ENCODE measurements at regions of chr1 and their contacts with region 1.

Region 1: DNA sequence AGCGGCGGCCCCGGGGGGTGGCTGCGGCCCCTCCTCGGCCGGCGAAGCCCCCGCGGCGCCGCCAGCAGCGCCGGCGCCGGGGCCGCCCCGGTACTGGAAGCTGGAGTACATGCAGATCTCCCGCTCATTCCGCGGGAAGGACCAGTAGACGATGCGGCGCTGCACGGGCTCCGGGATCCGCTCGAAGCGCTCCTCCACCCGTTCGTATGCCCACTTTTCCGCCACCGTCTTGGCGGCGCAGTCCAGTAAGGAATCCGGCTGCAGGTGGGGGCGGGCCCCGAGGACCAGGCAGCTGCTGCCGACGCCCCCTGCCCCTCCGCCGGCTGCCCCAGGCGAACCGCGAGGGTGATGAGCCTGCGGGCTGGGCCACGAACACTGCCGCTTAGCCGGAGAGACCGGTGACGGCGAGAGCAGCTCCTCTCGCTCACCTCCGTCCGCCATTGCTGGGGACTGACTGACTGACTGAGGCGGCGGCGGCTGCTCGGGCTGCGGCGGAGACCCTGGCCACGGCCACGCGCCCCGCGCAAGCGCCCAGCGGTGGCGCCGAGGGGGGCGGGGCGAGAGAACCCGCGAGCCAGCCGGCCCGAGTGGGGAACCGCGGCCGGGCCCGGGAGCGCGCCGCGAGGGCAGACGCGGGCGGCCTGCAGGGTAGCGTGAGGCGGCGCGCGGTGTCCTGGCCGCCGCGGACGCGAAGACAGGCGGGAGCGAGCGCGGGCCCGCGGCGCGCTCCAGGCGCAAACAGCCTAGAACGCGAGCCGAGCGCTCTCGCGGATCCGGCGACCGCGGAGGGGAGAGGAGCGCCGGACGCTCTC is at the start of gene ZSWIM5:
- DNase-seq: peak; percentile 53 to 74 (median 66)
- ATAC-seq: peak; percentile 88
- H3K4me3 ChIP-seq: peak within 1 kb of the TSS; percentile 77
- H3K4me3 Mint-ChIP-seq: peak within 1 kb of the TSS; percentile 84 to 100 (median 94)
- H3K27ac ChIP-seq: peak within 1 kb of the TSS; percentile 50
- H3K27ac Mint-ChIP-seq: peak within 1 kb of the TSS; percentile 66 to 94 (median 83)
- H3K4me1 ChIP-seq: peaks cover 11 to 18% of the 10 kb centered on the region in 2 donors
- H3K4me1 Mint-ChIP-seq: peaks cover 13 to 41% (median 27%) of the 10 kb centered on the region in 7 donors
- H3K27me3 ChIP-seq: no peaks in the 10 kb centered on the region
- H3K27me3 Mint-ChIP-seq: peaks cover 0 to 56% (median 0%) of the 10 kb centered on the region in 5 donors
- total RNA-seq, gene ZSWIM5: 0.17 to 3.6 (median 2.3) TPM

Region 2: DNA sequence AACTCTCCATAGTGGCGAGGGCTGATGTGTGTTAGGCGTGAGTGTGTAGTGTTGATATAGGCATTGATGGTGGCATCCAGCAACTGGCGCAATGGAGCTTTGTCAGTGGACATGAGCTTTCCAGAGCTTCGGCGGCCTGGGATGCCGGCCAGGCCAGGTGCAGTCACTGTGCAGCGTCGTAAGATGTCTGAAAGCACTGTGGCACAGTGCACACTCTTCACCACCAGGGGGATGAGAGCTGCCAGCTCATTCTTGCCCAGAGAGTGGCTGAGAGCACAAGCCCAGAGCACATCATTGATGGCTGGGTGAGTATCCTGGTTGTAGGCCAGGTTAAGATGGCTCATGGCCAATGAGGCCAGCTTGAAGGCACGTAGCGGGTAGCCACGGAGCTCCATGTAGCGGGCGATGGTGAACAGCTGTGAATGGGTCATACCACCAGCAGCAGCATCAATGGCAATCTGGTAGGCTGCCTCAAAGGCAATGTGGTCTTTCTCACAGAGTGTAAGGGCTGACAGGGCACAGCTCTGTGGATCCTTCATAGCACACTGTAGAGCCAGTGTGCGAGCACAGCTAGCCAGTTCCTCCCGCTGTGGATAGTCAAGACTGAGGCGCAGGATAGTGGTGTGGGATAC is 187.4 kb before region 1 on chr1:
- CTCF ChIA-PET with region 1: interaction called, 3 read pairs
- POLR2A ChIA-PET with region 1: interaction called, 3 read pairs
- intact Hi-C with region 1: loop called (anchors 5 to 10 kb)
- DNase-seq: peak in 8 of 9 donors; percentile 34 to 70 (median 58)
- ATAC-seq: peak; percentile 88
- H3K4me3 ChIP-seq: no peak overlapping the region
- H3K4me3 Mint-ChIP-seq: no peak overlapping the region
- H3K27ac ChIP-seq: no peak overlapping the region
- H3K27ac Mint-ChIP-seq: peak overlapping the region in 4 of 9 donors; percentile 15 to 91 (median 54)
- H3K4me1 ChIP-seq: peaks cover 0 to 5% of the 10 kb centered on the region in 2 donors
- H3K4me1 Mint-ChIP-seq: peaks cover 7 to 21% (median 17%) of the 10 kb centered on the region in 7 donors
- H3K27me3 ChIP-seq: no peaks in the 10 kb centered on the region
- H3K27me3 Mint-ChIP-seq: no peaks in the 10 kb centered on the region

Region 3: DNA sequence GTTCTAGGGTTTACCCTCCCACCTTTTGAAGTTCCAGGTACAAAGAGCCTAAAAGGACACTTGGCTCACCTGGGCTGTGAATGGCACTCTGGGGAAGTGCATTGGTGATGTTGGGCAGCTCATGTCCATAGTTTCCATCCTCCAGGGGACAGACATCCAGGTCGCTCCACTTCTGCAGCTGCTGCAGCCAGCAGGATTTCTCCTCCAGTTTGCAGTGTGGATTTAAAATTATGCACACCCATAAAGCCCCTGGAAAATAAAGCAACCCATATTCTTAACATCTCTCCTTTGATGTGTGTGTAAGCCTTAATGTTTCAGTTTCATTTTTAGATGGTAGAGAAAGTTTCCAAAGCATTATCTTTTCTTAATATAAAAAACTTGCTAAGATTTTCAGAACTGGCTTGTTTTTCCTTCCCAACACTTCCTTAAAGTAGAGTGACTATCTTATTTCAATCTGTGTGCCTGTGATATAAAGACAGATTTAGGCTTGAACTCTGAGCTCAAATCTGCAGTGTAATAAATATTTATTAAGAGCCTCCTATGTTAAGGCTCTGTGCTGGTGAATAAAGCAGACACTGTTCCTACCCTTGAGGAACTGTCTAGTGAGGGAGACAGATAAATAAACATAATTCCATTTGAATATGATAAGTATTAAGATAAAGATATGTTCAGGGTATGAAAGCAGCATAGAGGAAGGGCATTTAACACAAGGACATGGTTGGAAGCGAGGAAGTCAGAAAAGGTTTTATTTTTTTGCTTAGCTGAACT is 154.9 kb before region 1 on chr1:
- CTCF ChIA-PET with region 1: no interaction called
- POLR2A ChIA-PET with region 1: no interaction called
- intact Hi-C with region 1: loop called (anchors 2 to 10 kb)
- DNase-seq: peak in 7 of 9 donors; percentile 11 to 41 (median 34)
- ATAC-seq: peak; percentile 54
- H3K4me3 ChIP-seq: peak overlapping the region; percentile 38
- H3K4me3 Mint-ChIP-seq: peak overlapping the region; percentile 59 to 86 (median 81)
- H3K27ac ChIP-seq: peak overlapping the region; percentile 65
- H3K27ac Mint-ChIP-seq: peak overlapping the region in 8 of 9 donors; percentile 57 to 95 (median 90)
- H3K4me1 ChIP-seq: peaks cover 4% of the 10 kb centered on the region in 2 donors
- H3K4me1 Mint-ChIP-seq: peaks cover 9 to 25% (median 18%) of the 10 kb centered on the region in 7 donors
- H3K27me3 ChIP-seq: no peaks in the 10 kb centered on the region
- H3K27me3 Mint-ChIP-seq: no peaks in the 10 kb centered on the region

Region 4: DNA sequence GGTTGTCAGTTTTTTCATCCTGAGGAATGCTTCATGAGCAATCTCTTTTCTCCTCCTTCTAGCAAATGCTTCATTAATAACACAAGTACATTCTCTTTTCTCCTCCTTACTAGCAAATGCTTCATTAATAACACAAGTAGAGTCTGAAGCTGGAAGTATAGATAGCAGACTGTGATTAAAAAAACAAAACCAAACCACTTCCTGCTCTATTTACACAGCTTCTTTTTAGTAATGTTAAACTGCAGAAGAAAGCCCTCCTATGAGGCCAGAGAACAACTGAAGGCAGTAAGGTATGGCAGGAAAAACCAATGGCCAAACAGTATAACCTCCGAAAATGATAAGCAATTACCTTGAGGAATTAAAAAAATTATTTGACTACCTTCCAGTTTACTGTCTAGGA is 89.8 kb before region 1 on chr1:
- CTCF ChIA-PET with region 1: no interaction called
- POLR2A ChIA-PET with region 1: interaction called, 3 read pairs
- intact Hi-C with region 1: loop called in 1 of 2 experiments (anchors 2 kb)
- DNase-seq: peak in 5 of 9 donors; percentile 11 to 43 (median 32)
- ATAC-seq: peak; percentile 49
- H3K4me3 ChIP-seq: peak overlapping the region; percentile 23
- H3K4me3 Mint-ChIP-seq: peak overlapping the region; percentile 8 to 82 (median 70)
- H3K27ac ChIP-seq: peak overlapping the region; percentile 15
- H3K27ac Mint-ChIP-seq: peak overlapping the region in 8 of 9 donors; percentile 23 to 82 (median 68)
- H3K4me1 ChIP-seq: peaks cover 19 to 20% of the 10 kb centered on the region in 2 donors
- H3K4me1 Mint-ChIP-seq: peaks cover 10 to 36% (median 27%) of the 10 kb centered on the region in 7 donors
- H3K27me3 ChIP-seq: no peaks in the 10 kb centered on the region
- H3K27me3 Mint-ChIP-seq: peaks cover 0 to 4% (median 0%) of the 10 kb centered on the region in 5 donors

Region 5: GRCh38 chr1:45272983-45273382 is 66.9 kb after region 1 on chr1:
- CTCF ChIA-PET with region 1: no interaction called
- POLR2A ChIA-PET with region 1: no interaction called
- intact Hi-C with region 1: no loop called
- DNase-seq: no peak
- ATAC-seq: peak; percentile 57
- H3K4me3 ChIP-seq: no peak overlapping the region
- H3K4me3 Mint-ChIP-seq: no peak overlapping the region
- H3K27ac ChIP-seq: no peak overlapping the region
- H3K27ac Mint-ChIP-seq: no peak overlapping the region
- H3K4me1 ChIP-seq: no peaks in the 10 kb centered on the region
- H3K4me1 Mint-ChIP-seq: peaks cover 0 to 12% (median 7%) of the 10 kb centered on the region in 7 donors
- H3K27me3 ChIP-seq: no peaks in the 10 kb centered on the region
- H3K27me3 Mint-ChIP-seq: no peaks in the 10 kb centered on the region

Measured in naive thymus-derived CD4-positive, alpha-beta T cell (primary cell).